BJ (cell line): ENCODE measurements at regions of chr17 and their contacts with region 1.

Region 1: DNA sequence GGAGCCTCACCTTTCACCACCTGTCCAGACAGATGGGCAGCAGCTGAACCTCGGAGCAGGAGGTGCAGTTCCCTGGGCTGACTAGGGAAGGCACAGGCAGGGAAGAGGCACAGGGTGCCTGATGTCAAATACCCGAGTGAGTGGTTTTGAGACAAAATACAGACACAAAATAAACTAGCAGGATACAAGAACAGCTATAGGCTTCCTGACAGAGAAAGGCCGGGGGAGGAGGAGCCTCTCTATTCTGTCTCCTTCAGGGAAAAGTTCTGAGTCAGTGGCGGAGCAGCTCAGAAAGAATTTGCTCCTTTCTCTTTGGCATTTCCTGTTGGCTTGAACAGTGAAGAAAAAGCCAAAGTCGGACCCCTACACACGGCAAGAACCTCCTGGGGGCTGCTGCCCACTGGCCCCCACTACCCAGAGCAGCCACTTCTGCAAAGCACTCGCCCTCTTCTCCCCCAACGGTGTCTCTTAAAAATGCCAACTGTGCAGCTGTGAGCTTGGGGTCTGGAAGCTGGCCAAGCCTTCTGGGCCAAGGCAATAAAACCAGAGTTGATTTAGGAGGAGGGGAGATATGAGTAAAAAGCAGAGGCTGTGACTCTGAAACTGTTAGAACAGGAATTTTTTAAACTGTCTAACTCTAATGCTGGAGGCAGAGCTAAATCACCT is 14.4 kb upstream of the FAAP100 start:
- DNase-seq: peak; percentile 95
- H3K4me3 ChIP-seq: no peak overlapping the region
- H3K27me3 ChIP-seq: no peaks in the 10 kb centered on the region
- CTCF ChIP-seq: no peak

Region 2: GRCh38 chr17:81527591-81528383 is 38.8 kb before region 1 on chr17 and contains the start of gene FSCN2:
- CTCF ChIA-PET with region 1: no interaction called
- POLR2A ChIA-PET with region 1: interaction called, 14 read pairs
- DNase-seq: no peak
- H3K4me3 ChIP-seq: no peak within 1 kb of the TSS
- H3K27me3 ChIP-seq: no peaks in the 10 kb centered on the region
- CTCF ChIP-seq: peak; percentile 58
- polyA plus RNA-seq, gene FSCN2: 1.1 and 1.3 TPM in 2 replicates

Region 3: GRCh38 chr17:81553018-81553615 is 13.5 kb before region 1 on chr17:
- CTCF ChIA-PET with region 1: interaction called, 12 read pairs
- POLR2A ChIA-PET with region 1: interaction called, 5 read pairs
- DNase-seq: no peak
- H3K4me3 ChIP-seq: peak overlapping the region; percentile 95
- H3K27me3 ChIP-seq: no peaks in the 10 kb centered on the region
- CTCF ChIP-seq: peak; percentile 11; the same call in 1 of the 2 replicates

Region 4: DNA sequence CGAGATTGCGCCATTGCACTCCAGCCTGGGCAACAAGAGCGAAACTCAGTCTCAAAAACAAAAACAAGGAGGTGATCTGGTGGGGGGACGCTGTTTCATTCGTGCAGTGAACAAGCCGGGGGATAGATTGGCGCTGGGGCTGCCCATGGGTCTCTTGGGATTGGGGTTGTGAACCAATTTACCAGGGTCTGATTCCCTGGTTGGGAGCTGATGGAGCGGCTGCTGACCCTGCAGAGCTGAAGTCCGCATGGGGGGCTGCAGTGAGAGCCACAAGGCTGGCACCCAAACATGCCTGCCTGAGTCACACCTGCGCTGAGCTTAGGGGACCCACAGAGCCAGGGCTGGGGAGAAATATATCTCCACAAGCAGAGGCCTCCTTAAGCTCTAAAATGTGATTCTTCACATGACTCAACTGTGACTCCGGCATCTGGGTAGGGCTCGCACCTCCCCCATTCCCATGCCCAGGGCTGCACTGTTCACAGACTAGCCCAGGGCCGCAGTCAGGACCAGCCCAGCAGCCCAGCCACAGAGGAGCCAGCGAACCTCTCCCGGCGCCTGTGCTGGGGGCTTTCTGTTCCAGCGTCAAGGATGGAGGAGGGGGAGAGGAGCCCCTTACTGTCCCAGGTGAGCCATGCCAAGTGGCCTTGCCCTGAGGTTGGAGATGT is 75.4 kb after region 1 on chr17:
- CTCF ChIA-PET with region 1: no interaction called
- POLR2A ChIA-PET with region 1: no interaction called
- DNase-seq: no peak
- H3K4me3 ChIP-seq: no peak overlapping the region
- H3K27me3 ChIP-seq: no peaks in the 10 kb centered on the region
- CTCF ChIP-seq: no peak

Region 5: GRCh38 chr17:81716187-81716996 is 149.8 kb after region 1 on chr17:
- CTCF ChIA-PET with region 1: no interaction called
- POLR2A ChIA-PET with region 1: no interaction called
- DNase-seq: no peak
- H3K4me3 ChIP-seq: no peak overlapping the region
- H3K27me3 ChIP-seq: no peaks in the 10 kb centered on the region
- CTCF ChIP-seq: no peak